Naive thymus-derived CD8-positive, alpha-beta T cell (primary cell): ENCODE measurements at regions of chr17 and their contacts with region 1.

Region 1: GRCh38 chr17:36545465-36546417 is 1.0 kb downstream of the GGNBP2 start:
- DNase-seq: peak; percentile 94 to 99 (median 98)
- ATAC-seq: peak; percentile 77 to 78
- H3K4me3 Mint-ChIP-seq: peak overlapping the region; percentile 88 to 97 (median 91)
- H3K27ac Mint-ChIP-seq: peak overlapping the region; percentile 94 to 99 (median 96)
- H3K4me1 Mint-ChIP-seq: peaks cover 19 to 55% (median 43%) of the 10 kb centered on the region in 4 donors
- H3K27me3 Mint-ChIP-seq: no peaks in the 10 kb centered on the region

Region 2: DNA sequence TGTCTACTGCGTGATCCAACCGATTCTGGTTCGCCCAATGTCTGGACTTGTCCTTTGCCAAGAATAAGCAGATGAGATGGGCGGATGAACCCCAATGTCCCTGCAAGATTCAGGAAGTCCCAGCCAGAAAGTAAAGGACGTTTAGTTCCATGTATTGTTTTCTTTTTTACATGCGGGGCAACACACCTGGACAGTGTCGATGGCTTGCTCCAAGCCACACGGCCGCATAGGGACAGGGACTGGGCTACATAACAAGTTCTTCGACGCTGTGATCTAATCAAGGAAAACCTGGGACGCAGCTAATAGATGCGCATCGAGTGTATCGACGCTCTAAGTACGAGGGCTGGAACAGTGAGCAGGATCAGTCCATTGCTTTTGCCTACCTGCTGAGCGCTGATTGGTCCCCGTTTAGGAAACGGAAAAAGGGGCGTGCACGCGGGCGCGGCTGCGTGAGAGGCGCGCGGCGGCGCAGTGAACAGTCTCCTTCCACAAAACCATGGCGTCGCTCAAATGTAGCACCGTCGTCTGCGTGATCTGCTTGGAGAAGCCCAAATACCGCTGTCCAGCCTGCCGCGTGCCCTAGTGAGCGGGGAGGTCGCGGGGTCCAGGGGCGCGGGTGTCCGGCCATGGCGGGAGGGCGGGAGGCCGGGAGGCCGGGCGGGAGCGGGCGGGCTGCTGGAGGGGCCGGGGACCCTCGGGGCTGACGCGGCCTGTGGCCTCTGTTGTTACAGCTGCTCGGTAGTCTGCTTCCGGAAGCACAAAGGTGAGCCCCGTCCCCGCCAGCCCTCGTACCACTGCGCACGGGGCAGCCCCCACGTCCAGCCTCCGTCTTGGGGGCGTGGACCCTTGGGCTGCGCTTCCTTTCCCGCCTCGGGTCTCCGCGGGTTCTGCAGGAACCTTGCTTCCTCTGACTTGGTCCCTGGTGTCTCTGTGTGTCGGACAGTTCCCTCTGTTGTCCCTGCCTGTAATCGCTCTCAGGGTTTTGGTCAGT is 59.2 kb before region 1 on chr17 and contains the start of gene ZNHIT3:
- POLR2A ChIA-PET with region 1: interaction called, 13 read pairs
- DNase-seq: peak; percentile 80 to 94 (median 88)
- ATAC-seq: peak; percentile 90 to 97
- H3K4me3 Mint-ChIP-seq: peak within 1 kb of the TSS; percentile 94 to 100 (median 99)
- H3K27ac Mint-ChIP-seq: peak within 1 kb of the TSS; percentile 96 to 100 (median 99)
- H3K4me1 Mint-ChIP-seq: peaks cover 31 to 68% (median 61%) of the 10 kb centered on the region in 4 donors
- H3K27me3 Mint-ChIP-seq: peaks cover 2 to 12% (median 10%) of the 10 kb centered on the region in 5 donors
- polyA plus RNA-seq, gene ZNHIT3: 89.1 to 98.8 (median 91.2) TPM

Region 3: GRCh38 chr17:36586138-36586537 is 40.4 kb after region 1 on chr17:
- POLR2A ChIA-PET with region 1: interaction called, 13 read pairs
- DNase-seq: no peak
- ATAC-seq: no peak
- H3K4me3 Mint-ChIP-seq: no peak overlapping the region
- H3K27ac Mint-ChIP-seq: peak overlapping the region in 3 of 10 donors; percentile 8 to 71 (median 11)
- H3K4me1 Mint-ChIP-seq: peaks cover 5 to 32% (median 12%) of the 10 kb centered on the region in 4 donors
- H3K27me3 Mint-ChIP-seq: no peaks in the 10 kb centered on the region

Region 4: DNA sequence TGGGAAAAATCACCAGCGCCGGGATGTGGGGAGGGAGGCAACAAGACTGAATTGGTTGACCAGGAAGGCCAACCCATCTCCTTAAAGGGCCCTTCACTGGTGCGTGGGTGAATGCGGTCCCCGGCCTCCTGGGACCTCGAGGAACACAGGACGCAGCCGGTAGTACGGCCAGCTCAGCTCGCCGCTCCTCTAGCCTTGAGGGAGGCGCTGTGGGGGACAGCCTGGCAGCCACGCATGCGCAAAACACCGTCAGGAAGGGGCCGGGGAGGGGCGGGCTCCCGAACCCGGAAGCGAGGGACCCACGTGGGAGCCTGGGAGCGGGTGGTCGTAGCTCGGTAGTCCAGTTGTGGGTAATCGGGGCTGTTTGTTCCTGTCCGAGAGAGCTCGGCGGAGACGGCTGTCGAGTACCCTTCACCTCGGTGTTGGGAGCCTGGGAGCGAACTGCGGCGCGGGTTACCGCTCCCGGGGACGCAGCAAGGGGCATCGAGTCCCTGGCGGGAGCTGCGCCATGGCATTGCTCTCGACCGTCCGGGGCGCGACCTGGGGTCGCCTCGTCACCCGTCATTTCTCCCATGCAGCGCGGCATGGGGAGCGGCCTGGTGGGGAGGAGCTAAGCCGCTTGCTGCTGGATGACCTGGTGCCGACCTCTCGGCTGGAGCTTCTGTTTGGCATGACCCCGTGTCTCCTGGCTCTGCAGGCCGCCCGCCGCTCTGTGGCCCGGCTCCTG is 55.7 kb after region 1 on chr17 and contains the start of gene MRM1:
- POLR2A ChIA-PET with region 1: interaction called, 52 read pairs
- DNase-seq: peak; percentile 77 to 95 (median 86)
- ATAC-seq: peak; percentile 81 to 87
- H3K4me3 Mint-ChIP-seq: peak within 1 kb of the TSS; percentile 90 to 97 (median 93)
- H3K27ac Mint-ChIP-seq: peak within 1 kb of the TSS; percentile 93 to 99 (median 96)
- H3K4me1 Mint-ChIP-seq: peaks cover 31 to 45% (median 43%) of the 10 kb centered on the region in 4 donors
- H3K27me3 Mint-ChIP-seq: no peaks in the 10 kb centered on the region
- polyA plus RNA-seq, gene MRM1: 3.2 to 11.1 (median 6.8) TPM

Region 5: DNA sequence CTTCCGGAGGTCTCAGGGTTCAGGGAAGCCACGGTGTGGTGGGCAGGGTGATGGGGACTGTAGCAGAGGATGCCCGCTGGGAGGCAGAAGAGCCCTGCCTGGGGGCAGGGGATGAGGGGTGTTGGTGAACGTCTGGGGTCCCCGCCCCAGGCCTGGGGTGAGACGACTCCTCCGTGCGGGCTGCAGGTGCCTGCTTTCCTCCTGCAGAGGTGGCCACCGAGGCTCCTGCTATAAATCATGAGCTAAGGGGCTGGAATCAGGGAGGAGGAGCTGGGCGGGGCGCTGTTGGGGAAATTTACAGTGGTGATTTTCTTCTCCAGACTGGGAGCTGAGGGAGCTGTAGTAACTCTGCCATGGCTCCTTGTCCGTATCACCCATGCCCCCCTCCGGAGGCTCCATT is 222.7 kb after region 1 on chr17:
- POLR2A ChIA-PET with region 1: no interaction called
- DNase-seq: no peak
- ATAC-seq: no peak
- H3K4me3 Mint-ChIP-seq: no peak overlapping the region
- H3K27ac Mint-ChIP-seq: peak overlapping the region in 2 of 10 donors; percentile 29 to 33
- H3K4me1 Mint-ChIP-seq: peaks cover 5 to 6% (median 5%) of the 10 kb centered on the region in 4 donors
- H3K27me3 Mint-ChIP-seq: peaks cover 0 to 3% (median 0%) of the 10 kb centered on the region in 5 donors